ENCODE measurements at regions of chr3 and their contacts with region 1.

Region 1: DNA sequence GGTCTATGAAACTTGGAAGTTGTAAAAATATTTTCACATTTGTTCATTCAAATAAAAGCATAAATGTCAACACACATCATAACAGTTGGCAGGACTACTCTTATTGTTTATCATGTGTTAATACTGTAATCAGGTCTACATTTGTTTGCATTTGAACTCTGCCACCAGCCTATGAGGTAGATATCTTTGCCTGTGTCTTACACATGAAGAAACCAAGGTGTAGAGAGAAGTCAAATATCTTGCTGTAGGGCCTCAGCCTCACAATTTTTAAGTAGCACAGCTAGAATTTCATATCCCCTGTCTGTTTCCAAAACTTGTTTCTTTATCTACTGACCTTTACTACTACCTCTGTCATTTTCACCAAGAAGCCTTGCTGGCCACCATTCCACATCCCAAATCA is 161.9 kb downstream of the ZIC4 start:
- DNase-seq: no peak
- ATAC-seq: no peak
- H3K4me3 ChIP-seq: no peak overlapping the region
- H3K27ac ChIP-seq: no peak overlapping the region
- H3K4me1 ChIP-seq: no peaks in the 10 kb centered on the region
- H3K27me3 ChIP-seq: no peaks in the 10 kb centered on the region
- CTCF ChIP-seq: no peak
- POLR2A ChIP-seq: no peak

Region 2: DNA sequence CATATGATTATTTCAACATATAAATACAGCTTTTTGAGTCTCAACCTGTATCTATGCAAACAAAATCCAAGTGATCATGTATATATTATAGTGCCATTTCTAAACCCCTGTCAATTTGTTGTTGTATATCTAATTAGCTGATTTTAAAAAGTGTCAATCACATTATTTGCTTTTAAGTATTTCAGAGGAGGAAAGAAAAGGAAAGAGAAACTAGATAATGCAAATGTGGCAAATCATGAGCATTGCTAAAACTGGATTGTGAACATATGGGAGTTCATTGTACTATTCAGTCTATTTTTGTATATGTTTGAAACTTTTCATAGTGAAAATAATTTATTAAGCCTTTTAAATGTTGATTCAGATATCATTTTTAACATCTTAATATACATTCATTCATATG is 28.7 kb before region 1 on chr3:
- intact Hi-C with region 1: loop called in 1 of 10 experiments (anchors 2 kb)
- DNase-seq: no peak
- ATAC-seq: no peak
- H3K4me3 ChIP-seq: no peak overlapping the region
- H3K27ac ChIP-seq: no peak overlapping the region
- H3K4me1 ChIP-seq: no peaks in the 10 kb centered on the region
- H3K27me3 ChIP-seq: no peaks in the 10 kb centered on the region
- CTCF ChIP-seq: no peak
- POLR2A ChIP-seq: no peak